ENCODE measurements at regions of chr1 and their contacts with region 1.

Region 1: GRCh38 chr1:24744911-24745710 is at the start of gene CLIC4:
- DNase-seq: peak; percentile 100
- ATAC-seq: peak; percentile 94 to 95
- total RNA-seq, gene CLIC4: 164 to 263 TPM

Region 2: DNA sequence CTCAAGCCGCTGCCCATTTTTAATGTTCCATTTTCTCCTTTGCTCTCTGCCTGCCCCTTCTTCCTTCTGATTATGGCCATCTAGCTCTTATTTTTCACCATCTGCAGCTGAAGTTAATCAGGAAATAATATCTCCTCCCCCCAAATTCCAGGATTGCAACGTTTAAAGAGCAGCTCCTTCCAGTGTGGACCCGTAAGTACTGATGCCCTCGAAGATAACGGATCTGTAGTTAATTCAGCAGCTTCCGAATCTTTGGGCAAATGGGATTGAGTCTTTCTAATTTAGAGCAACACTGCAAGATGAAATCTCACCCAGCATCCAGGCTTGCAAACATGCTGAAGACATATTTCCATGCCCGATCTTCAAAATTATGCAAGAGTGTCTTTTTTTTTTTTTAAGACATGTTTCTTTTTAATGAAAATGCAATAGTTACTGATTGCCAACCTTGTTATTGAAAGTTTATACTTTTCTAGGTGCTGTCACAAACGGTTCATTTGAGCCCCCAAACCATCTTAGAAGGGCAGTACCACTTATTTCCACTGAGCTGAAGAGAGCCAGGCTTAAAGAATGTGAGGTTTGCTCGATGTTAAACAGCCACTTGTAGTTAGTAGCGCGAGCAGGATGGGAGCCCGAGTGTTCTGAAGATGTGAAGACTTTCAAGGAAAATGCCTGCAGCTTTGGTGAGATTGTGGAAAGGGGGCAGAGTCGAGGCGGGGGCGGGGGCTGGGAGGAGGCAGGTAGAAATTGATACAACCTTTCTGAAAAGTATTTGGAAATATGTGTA is 253.3 kb before region 1 on chr1:
- intact Hi-C with region 1: no loop called
- DNase-seq: no peak
- ATAC-seq: no peak

Region 3: DNA sequence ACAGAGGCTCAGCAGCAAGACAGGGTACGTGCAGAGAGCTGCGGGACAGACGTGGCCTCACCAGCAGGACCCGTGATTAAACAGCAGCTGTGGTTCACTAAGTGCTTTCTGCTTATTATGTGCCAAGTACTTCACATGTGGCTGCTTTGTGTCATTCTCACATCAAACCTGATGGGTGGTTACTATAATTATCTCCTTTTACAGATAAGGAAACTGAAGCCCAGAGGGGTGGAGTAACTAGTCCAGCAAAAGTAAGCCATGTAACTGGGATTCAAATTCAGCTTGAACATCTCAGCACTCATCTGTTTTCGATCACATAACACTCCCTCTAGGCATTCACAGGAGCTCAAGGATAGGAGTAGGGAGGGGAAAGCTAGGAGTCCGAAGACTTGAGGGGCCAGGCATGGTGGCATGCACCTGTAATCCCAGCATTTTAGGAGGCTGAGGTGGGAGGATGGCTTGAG is 50.7 kb before region 1 on chr1:
- intact Hi-C with region 1: loop called (anchors 2 to 10 kb)
- DNase-seq: peak; percentile 67
- ATAC-seq: peak; percentile 85 to 90

Region 4: GRCh38 chr1:24793447-24794131 is 48.5 kb after region 1 on chr1:
- intact Hi-C with region 1: loop called in 1 of 2 experiments (anchors 5 kb)
- DNase-seq: no peak
- ATAC-seq: peak; percentile 76

Region 5: DNA sequence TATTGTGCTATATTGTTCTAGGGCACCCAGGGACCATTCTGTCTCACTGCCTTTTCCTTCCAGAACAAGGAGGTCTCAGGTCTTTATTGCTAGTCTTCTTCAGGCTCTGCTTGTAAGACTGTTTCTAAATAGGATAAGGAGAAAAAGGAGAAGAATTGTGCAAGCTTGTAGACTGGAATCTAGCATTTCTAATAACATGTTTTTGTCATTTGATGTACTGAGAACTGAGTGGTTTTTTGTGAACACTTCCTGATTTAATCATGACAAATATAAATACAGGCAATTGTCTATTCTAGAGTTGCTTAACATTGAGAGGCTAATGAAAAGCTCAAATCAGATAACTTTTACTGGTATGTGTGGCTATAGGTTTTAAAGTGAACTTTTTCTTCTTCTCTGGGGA is 77.8 kb after region 1 on chr1:
- intact Hi-C with region 1: loop called (anchors 2 to 10 kb)
- DNase-seq: no peak
- ATAC-seq: no peak

Region 6: GRCh38 chr1:24830680-24831272 is 85.7 kb after region 1 on chr1:
- intact Hi-C with region 1: loop called (anchors 2 to 10 kb)
- DNase-seq: no peak
- ATAC-seq: peak; percentile 65 to 85

Region 7: GRCh38 chr1:25239681-25240541 is 494.8 kb after region 1 on chr1:
- intact Hi-C with region 1: loop called in 1 of 2 experiments (anchors 10 kb)
- DNase-seq: peak; percentile 93
- ATAC-seq: peak; percentile 93 to 94

Measured in left cardiac atrium (tissue), 4 donors.